ENCODE measurements at regions of chr3 and their contacts with region 1.

Region 1: GRCh38 chr3:124246949-124247348 is 255.0 kb upstream of the ROPN1 start:
- DNase-seq: no peak
- ATAC-seq: peak; percentile 84
- H3K4me3 ChIP-seq: no peak overlapping the region
- H3K27ac ChIP-seq: no peak overlapping the region
- H3K4me1 ChIP-seq: peaks cover 15% of the 10 kb centered on the region
- H3K27me3 ChIP-seq: no peaks in the 10 kb centered on the region; a peak in 1 of 4 replicates
- CTCF ChIP-seq: peak; percentile 55 to 60 (median 59); a peak in 5 of 6 replicates
- EP300 ChIP-seq: no peak
- POLR2A ChIP-seq: no peak
- RAD21 ChIP-seq: peak; percentile 59

Region 2: GRCh38 chr3:124014366-124014942 is 232.5 kb before region 1 on chr3:
- CTCF ChIA-PET with region 1: interaction called, 15 read pairs
- POLR2A ChIA-PET with region 1: no interaction called
- RAD21 ChIA-PET with region 1: interaction called, 3 read pairs
- SMC1A ChIA-PET with region 1: interaction called, 12 read pairs
- in situ Hi-C with region 1: no loop called
- intact Hi-C with region 1: loop called (anchors 10 kb)
- DNase-seq: no peak
- ATAC-seq: no peak
- H3K4me3 ChIP-seq: no peak overlapping the region
- H3K27ac ChIP-seq: no peak overlapping the region
- H3K4me1 ChIP-seq: no peaks in the 10 kb centered on the region
- H3K27me3 ChIP-seq: no peaks in the 10 kb centered on the region
- CTCF ChIP-seq: no peak
- EP300 ChIP-seq: no peak
- POLR2A ChIP-seq: no peak
- RAD21 ChIP-seq: no peak

Region 3: DNA sequence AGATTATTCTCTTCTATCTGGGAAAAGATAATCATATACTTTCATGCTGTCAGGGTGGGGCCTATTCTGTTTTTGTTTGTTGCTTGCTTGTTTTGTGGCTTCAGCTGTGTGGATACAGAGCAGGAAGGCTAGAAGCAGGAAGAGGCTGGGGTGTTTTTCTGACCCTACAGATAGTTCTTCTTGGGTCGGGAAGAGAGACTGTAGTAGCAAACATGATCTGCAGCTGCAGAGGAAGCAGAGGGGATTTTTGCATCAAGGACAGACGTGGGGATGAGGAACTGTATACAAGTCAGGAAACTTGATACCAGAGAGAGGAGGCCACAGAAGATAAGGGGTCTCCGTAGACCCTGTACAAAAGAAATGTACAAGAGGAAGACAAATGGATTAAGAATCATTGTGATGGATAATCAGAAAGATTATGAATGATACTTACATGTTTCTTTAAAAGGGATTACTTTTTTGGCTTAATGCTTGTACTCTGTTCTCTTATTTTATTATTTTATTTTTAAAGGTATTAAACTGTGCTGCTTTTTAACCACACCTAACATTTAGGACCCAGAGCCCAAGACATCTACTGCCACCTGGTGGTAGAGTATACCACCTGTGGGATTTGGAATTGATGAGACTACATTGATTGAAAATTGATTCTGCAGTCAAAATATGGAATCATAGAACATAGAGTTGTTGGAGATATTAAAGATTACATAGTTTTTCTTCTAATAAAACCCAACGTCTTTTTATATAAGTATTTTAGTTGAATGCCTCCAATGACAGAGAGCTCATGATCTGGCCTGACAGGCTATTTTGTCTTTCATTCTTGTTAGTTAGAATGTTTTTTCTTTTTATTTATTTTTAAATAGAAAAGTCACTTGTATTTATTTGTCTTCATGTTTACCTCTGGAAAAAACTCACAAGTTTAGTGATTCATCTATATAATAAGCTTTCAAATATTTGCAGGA is 167.7 kb before region 1 on chr3:
- CTCF ChIA-PET with region 1: interaction called, 8 read pairs
- POLR2A ChIA-PET with region 1: no interaction called
- RAD21 ChIA-PET with region 1: interaction called, 4 read pairs
- SMC1A ChIA-PET with region 1: interaction called, 5 read pairs
- in situ Hi-C with region 1: no loop called
- intact Hi-C with region 1: loop called (anchors 5 kb)
- DNase-seq: no peak
- ATAC-seq: peak; percentile 64; the same call in 2 of the 3 replicates
- H3K4me3 ChIP-seq: no peak overlapping the region
- H3K27ac ChIP-seq: no peak overlapping the region
- H3K4me1 ChIP-seq: no peaks in the 10 kb centered on the region
- H3K27me3 ChIP-seq: peaks cover 0 to 5% of the 10 kb centered on the region in 2 experiments; a peak in 2 of 4 replicates
- CTCF ChIP-seq: peak; percentile 53 to 63 (median 59)
- EP300 ChIP-seq: no peak
- POLR2A ChIP-seq: no peak
- RAD21 ChIP-seq: peak; percentile 70

Region 4: GRCh38 chr3:124207873-124208485 is 39.0 kb before region 1 on chr3:
- CTCF ChIA-PET with region 1: interaction called, 10 read pairs
- POLR2A ChIA-PET with region 1: no interaction called
- RAD21 ChIA-PET with region 1: interaction called, 6 read pairs
- SMC1A ChIA-PET with region 1: interaction called, 7 read pairs
- in situ Hi-C with region 1: no loop called
- intact Hi-C with region 1: loop called (anchors 5 kb)
- DNase-seq: peak; percentile 91
- ATAC-seq: peak; percentile 98
- H3K4me3 ChIP-seq: no peak overlapping the region
- H3K27ac ChIP-seq: peak overlapping the region; percentile 75
- H3K4me1 ChIP-seq: peaks cover 32% of the 10 kb centered on the region
- H3K27me3 ChIP-seq: no peaks in the 10 kb centered on the region
- CTCF ChIP-seq: no peak
- EP300 ChIP-seq: peak; percentile 52 to 74; a peak in 2 of 4 replicates
- POLR2A ChIP-seq: no peak
- RAD21 ChIP-seq: no peak

Region 5: DNA sequence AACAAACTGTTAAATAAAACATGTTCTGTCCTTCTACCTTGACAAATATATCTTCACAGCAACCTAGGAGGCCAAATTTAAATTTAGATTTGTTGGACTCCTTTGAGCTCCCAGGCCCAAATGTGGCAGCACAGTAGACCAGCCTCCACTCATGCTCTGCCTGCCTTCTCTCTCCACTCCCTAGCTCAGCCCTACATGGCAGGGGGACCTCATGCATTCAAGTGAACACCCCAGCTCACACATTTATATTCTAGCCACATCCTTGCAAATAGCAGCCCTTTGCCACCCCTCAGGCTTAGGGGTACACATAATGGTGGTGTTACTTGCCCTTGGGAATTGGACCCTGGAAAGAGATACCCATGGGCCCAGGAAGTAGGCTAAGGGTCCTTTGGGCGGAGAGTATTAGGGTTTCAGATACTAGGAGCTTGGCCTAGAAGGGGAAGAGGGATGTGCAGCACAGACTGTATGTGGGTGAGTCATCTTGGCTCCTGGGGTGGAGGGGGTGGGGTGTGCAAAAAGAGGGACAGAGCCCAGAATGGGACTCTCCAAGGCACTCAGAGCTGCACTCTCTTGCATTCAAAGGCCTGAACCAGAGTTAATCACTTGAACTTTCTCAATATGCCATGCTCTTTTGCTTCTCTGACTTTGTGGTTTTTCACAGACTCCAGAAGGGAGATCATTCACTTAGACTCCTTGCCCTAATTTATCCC is 13.4 kb after region 1 on chr3:
- CTCF ChIA-PET with region 1: interaction called, 32 read pairs
- POLR2A ChIA-PET with region 1: interaction called, 3 read pairs
- RAD21 ChIA-PET with region 1: interaction called, 5 read pairs
- SMC1A ChIA-PET with region 1: interaction called, 5 read pairs
- in situ Hi-C with region 1: no loop called
- intact Hi-C with region 1: no loop called
- DNase-seq: no peak
- ATAC-seq: peak; percentile 71
- H3K4me3 ChIP-seq: no peak overlapping the region
- H3K27ac ChIP-seq: no peak overlapping the region
- H3K4me1 ChIP-seq: no peaks in the 10 kb centered on the region; the same call in 1 of the 2 replicates
- H3K27me3 ChIP-seq: no peaks in the 10 kb centered on the region
- CTCF ChIP-seq: no peak
- EP300 ChIP-seq: no peak
- POLR2A ChIP-seq: no peak
- RAD21 ChIP-seq: no peak

Region 6: GRCh38 chr3:124486324-124486723 is 239.4 kb after region 1 on chr3:
- CTCF ChIA-PET with region 1: no interaction called
- POLR2A ChIA-PET with region 1: no interaction called
- RAD21 ChIA-PET with region 1: no interaction called
- SMC1A ChIA-PET with region 1: no interaction called
- in situ Hi-C with region 1: no loop called
- intact Hi-C with region 1: no loop called
- DNase-seq: no peak
- ATAC-seq: no peak
- H3K4me3 ChIP-seq: no peak overlapping the region
- H3K27ac ChIP-seq: no peak overlapping the region
- H3K4me1 ChIP-seq: no peaks in the 10 kb centered on the region
- H3K27me3 ChIP-seq: 0 out of 4 replicates have a peak, but pooled peaks cover 0 to 2% of the 10 kb centered on the region in 2 experiments
- CTCF ChIP-seq: no peak
- EP300 ChIP-seq: no peak
- POLR2A ChIP-seq: no peak
- RAD21 ChIP-seq: no peak